ENCODE measurements at regions of chr2 and their contacts with region 1.

Region 1: GRCh38 chr2:238784671-238785527 is 63.0 kb upstream of the TWIST2 start:
- DNase-seq: peak; percentile 51
- H3K4me3 ChIP-seq: no peak overlapping the region
- H3K27ac ChIP-seq: no peak overlapping the region
- H3K4me1 ChIP-seq: no peaks in the 10 kb centered on the region
- H3K27me3 ChIP-seq: no peaks in the 10 kb centered on the region
- CTCF ChIP-seq: peak; percentile 85 to 88
- POLR2A ChIP-seq: no peak

Region 2: DNA sequence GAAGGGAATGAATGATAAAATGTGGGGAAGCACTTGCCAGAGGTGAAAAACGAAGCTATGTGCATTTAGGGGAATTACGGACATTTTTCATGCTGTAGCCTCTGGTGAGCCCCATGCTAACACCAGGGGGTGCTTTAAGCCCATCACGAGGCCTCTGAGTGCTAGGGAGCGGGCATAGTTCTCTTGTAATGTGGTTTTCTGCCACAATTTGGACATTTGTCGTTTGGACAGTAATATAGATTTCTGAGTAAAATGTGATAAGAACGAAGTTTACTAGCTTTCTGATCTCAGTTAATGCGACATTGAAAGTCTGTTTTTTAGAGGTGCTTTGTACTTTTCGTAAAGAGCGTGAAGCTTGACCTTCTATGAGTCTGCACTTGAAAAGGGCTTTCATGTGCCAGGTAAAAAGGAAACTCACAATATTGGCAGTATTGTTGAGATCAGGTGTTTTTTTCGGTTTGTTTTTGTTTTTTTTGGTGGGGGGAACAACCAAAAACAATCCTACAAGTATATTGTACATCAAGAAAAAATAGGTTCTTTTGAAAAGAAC is 414.0 kb before region 1 on chr2:
- CTCF ChIA-PET with region 1: interaction called, 49 read pairs
- POLR2A ChIA-PET with region 1: no interaction called
- dilution Hi-C with region 1: no loop called
- intact Hi-C with region 1: no loop called
- DNase-seq: peak; percentile 55
- H3K4me3 ChIP-seq: no peak overlapping the region
- H3K27ac ChIP-seq: no peak overlapping the region
- H3K4me1 ChIP-seq: no peaks in the 10 kb centered on the region
- H3K27me3 ChIP-seq: no peaks in the 10 kb centered on the region
- CTCF ChIP-seq: peak; percentile 77 to 78
- POLR2A ChIP-seq: no peak

Region 3: DNA sequence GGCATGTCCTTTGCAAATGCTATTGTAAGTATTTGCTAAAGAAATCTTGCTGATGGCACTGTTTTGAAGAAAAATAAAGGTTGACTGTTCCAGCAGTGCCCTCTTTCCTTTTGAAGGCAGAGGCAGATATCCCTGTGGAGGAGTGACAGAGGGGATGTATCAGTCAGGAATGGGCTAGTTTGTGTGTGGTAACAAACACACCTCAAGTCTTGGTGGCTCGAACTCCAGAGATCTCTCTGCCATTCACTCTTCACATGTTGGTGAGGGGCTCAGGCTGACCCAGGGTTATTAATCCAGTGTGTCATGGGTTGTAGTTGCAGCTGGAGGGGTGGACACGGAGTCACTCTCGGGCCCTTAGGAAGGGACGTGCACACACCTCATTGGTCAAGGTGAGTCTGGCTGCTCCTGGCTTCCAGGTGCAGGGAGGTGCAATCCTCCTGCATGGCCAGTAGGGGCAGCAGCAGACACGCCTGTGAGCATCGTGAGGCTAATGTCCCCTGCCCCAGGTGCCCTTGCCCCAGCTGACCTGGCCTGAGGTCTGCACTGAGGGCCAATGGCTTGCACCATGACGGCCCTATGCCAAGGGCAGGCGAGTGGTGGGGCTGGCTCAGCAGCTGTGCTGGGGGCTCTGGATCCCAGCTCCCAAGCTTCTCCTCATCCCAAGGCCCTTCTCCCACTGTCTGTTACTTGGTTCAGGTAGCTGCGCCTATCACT is 211.7 kb before region 1 on chr2:
- CTCF ChIA-PET with region 1: interaction called, 21 read pairs
- POLR2A ChIA-PET with region 1: no interaction called
- dilution Hi-C with region 1: no loop called
- intact Hi-C with region 1: loop called (anchors 1 kb)
- DNase-seq: no peak
- H3K4me3 ChIP-seq: no peak overlapping the region
- H3K27ac ChIP-seq: no peak overlapping the region
- H3K4me1 ChIP-seq: no peaks in the 10 kb centered on the region
- H3K27me3 ChIP-seq: no peaks in the 10 kb centered on the region
- CTCF ChIP-seq: peak; percentile 60 to 77
- POLR2A ChIP-seq: no peak

Region 4: GRCh38 chr2:238724728-238725127 is 60.2 kb before region 1 on chr2:
- CTCF ChIA-PET with region 1: no interaction called
- POLR2A ChIA-PET with region 1: no interaction called
- dilution Hi-C with region 1: no loop called
- intact Hi-C with region 1: no loop called
- DNase-seq: no peak
- H3K4me3 ChIP-seq: no peak overlapping the region
- H3K27ac ChIP-seq: no peak overlapping the region
- H3K4me1 ChIP-seq: no peaks in the 10 kb centered on the region
- H3K27me3 ChIP-seq: no peaks in the 10 kb centered on the region
- CTCF ChIP-seq: no peak
- POLR2A ChIP-seq: no peak

Region 5: GRCh38 chr2:238875101-238875470 is 90.2 kb after region 1 on chr2:
- CTCF ChIA-PET with region 1: interaction called, 24 read pairs
- POLR2A ChIA-PET with region 1: no interaction called
- dilution Hi-C with region 1: no loop called
- intact Hi-C with region 1: no loop called
- DNase-seq: no peak
- H3K4me3 ChIP-seq: no peak overlapping the region
- H3K27ac ChIP-seq: no peak overlapping the region
- H3K4me1 ChIP-seq: no peaks in the 10 kb centered on the region
- H3K27me3 ChIP-seq: no peaks in the 10 kb centered on the region
- CTCF ChIP-seq: no peak
- POLR2A ChIP-seq: no peak

Region 6: GRCh38 chr2:238970553-238971081 is 185.7 kb after region 1 on chr2:
- CTCF ChIA-PET with region 1: interaction called, 4 read pairs
- POLR2A ChIA-PET with region 1: no interaction called
- dilution Hi-C with region 1: no loop called
- intact Hi-C with region 1: loop called (anchors 2 kb)
- DNase-seq: peak; percentile 66
- H3K4me3 ChIP-seq: no peak overlapping the region
- H3K27ac ChIP-seq: no peak overlapping the region
- H3K4me1 ChIP-seq: peaks cover 20% of the 10 kb centered on the region
- H3K27me3 ChIP-seq: no peaks in the 10 kb centered on the region
- CTCF ChIP-seq: peak; percentile 96 to 99
- POLR2A ChIP-seq: no peak

Measured in endothelial cell of umbilical vein (primary cell).